ENCODE measurements at regions of chr2 and their contacts with region 1.

Region 1: GRCh38 chr2:206079724-206080465 is 6.1 kb downstream of the INO80D start:
- DNase-seq: no peak
- ATAC-seq: no peak
- H3K4me3 ChIP-seq: no peak overlapping the region
- H3K27ac ChIP-seq: peak overlapping the region in 1 of 4 donors; percentile 11
- H3K4me1 ChIP-seq: peaks cover 8 to 11% of the 10 kb centered on the region in 2 donors
- H3K27me3 ChIP-seq: no peaks in the 10 kb centered on the region
- CTCF ChIP-seq: no peak
- POLR2A ChIP-seq: no peak

Region 2: DNA sequence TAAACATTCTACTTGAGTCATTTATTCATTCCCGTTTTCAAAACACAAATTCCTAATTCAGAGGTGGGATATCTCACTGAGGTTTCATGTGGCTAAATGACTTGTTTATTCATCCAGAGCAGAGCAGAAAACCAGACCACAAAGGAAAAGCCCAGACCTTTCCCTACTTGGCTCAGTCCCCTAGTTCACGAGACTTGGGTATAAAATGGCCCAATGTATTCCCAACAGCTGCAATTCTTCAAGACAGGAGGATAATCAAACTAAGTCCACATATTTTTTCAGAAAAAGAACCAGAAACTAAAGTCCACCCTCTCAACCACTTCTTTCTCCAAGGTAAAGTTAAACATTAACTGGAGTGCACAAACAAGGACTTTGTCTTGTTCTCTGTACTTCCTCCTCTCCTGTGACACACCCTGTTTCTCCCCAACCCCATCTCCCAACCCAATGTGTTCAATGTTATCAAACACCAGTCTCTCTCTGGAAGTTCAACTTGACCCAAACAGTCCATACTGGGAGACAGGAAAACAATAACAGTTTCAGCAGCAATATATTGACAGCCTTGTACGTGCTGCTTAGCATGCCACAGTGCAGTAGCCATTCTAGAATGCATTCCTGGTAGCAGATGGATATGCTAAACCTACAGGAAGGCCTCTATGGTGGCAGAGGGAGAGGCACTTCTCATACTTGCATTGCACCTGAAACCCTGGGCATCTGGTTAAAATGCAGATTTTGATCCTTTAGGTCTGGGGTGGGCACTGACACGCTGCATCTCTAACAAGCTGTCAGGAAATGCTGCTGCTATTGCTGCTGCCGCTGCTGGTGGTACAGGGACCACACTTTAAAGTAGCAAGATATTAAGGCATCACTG is 104.6 kb before region 1 on chr2:
- in situ Hi-C with region 1: no loop called
- intact Hi-C with region 1: no loop called
- DNase-seq: no peak
- ATAC-seq: no peak
- H3K4me3 ChIP-seq: no peak overlapping the region
- H3K27ac ChIP-seq: no peak overlapping the region
- H3K4me1 ChIP-seq: no peaks in the 10 kb centered on the region
- H3K27me3 ChIP-seq: no peaks in the 10 kb centered on the region
- CTCF ChIP-seq: no peak
- POLR2A ChIP-seq: no peak

Region 3: DNA sequence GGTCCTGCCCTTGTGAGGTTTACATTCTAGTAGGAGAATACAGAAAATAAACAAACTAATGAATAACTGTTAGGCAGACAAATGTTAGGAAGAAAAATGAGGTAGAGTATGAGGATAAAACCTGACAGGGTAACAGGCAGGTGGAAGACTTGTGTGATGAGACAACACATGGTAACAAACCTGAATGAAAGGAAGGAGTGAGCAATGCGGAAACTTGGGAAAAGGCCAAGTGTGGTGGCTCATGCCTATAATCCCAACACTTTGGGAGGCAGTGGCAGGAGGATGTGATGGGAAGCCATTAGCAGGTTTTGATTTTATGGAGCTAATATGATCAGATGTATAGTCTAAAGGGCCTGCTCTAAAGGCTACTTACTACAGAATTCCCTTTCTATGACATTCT is 68.1 kb before region 1 on chr2:
- in situ Hi-C with region 1: loop called in 1 of 4 experiments (anchors 10 kb)
- intact Hi-C with region 1: no loop called
- DNase-seq: no peak
- ATAC-seq: no peak
- H3K4me3 ChIP-seq: no peak overlapping the region
- H3K27ac ChIP-seq: no peak overlapping the region
- H3K4me1 ChIP-seq: no peaks in the 10 kb centered on the region
- H3K27me3 ChIP-seq: no peaks in the 10 kb centered on the region
- CTCF ChIP-seq: no peak
- POLR2A ChIP-seq: no peak

Region 4: DNA sequence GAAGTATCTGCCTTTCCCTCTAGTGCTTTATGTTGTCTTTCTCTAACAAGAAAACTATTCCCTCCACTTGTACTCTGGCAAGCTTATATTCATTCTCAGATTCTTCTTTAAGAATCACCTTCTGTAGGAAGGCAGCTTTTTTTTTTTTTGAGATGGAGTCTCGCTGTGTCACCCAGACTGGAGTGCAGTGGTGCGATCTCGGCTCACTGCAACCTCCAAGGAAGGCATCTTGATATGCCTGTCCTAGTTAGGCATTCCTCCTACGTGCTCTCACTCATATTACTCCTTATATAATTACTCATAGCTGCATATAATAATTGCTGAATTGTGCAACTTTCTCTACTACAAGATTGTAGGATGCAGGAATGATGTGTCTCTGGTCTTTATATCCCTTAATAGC is 63.6 kb after region 1 on chr2:
- in situ Hi-C with region 1: loop called in 1 of 4 experiments (anchors 10 kb)
- intact Hi-C with region 1: no loop called
- DNase-seq: no peak
- ATAC-seq: no peak
- H3K4me3 ChIP-seq: no peak overlapping the region
- H3K27ac ChIP-seq: no peak overlapping the region
- H3K4me1 ChIP-seq: no peaks in the 10 kb centered on the region
- H3K27me3 ChIP-seq: no peaks in the 10 kb centered on the region
- CTCF ChIP-seq: no peak
- POLR2A ChIP-seq: no peak